Right ventricle myocardium inferior (tissue), 1 donor: ENCODE measurements at regions of chr17 and their contacts with region 1.

Region 1: DNA sequence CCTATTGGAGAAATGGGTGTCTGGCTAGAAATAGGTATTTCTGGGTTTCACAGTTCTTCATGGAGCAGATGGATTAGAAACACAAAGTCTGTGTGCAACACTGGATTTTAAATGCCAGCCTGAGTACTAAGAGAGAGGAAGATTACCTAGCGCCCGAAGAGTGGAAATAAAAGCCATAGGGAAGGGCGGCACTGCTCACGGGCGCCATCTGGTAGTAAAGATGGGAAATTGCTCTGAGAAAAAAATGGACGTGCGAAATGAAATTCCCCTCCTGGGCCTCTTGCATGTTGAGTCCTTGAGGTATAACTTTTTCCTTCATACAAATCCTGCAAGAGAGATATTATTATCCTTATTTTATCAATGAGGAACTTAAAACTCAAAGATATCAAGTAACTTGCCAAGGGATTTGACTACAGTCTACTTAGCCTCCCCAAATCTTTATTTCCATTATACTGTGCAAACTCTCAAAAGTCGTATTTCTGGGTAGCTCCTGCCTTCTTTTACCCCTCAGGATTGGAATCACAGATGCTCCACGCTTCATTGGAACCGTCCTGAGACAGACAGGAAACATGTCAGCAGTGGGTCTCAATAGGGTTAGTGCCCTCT is 72.8 kb downstream of the MMD start:
- DNase-seq: peak; percentile 56
- ATAC-seq: peak; percentile 80

Region 2: GRCh38 chr17:55053855-55054254 is 295.0 kb before region 1 on chr17:
- intact Hi-C with region 1: loop called (anchors 10 kb)
- DNase-seq: no peak
- ATAC-seq: no peak

Region 3: GRCh38 chr17:55238179-55238930 is 110.5 kb before region 1 on chr17:
- intact Hi-C with region 1: loop called (anchors 2 kb)
- DNase-seq: peak; percentile 95
- ATAC-seq: peak; percentile 99

Region 4: DNA sequence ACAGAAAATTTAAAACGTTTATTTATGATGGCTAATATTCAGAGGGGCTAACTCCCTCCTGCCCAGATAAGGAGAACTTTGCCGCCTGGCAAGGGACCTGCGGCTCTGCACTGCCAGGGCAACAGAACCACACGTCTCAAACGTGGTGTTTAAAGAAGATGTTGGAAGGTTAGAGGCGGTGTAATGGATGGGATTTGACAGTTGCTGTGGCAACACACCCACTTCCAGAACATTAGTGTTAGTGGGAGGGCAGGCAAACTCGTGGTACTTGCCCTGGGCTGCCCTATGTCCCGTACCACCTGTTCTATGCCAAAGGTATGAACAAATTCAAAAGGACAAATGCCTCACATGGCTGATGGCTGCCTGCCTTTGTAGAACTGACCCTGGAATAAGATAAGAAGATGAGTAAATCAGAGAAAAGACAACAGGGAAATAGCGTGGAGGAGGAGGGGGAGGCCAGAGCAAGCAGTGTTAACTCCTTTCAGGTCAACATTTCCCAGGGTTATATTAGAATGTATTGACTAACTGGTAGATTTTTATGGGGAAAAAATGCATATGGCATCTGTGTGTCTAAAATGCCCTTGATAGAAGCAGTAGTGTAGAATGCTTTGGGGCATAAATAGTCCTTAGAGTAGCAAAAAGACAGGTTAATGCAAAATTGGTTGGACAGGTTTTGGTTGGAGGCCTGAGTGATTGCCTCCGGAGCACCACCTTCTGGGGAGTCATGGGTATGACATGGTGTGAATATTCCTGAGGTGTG is 53.3 kb before region 1 on chr17:
- intact Hi-C with region 1: loop called (anchors 10 kb)
- DNase-seq: no peak
- ATAC-seq: peak; percentile 89

Region 5: DNA sequence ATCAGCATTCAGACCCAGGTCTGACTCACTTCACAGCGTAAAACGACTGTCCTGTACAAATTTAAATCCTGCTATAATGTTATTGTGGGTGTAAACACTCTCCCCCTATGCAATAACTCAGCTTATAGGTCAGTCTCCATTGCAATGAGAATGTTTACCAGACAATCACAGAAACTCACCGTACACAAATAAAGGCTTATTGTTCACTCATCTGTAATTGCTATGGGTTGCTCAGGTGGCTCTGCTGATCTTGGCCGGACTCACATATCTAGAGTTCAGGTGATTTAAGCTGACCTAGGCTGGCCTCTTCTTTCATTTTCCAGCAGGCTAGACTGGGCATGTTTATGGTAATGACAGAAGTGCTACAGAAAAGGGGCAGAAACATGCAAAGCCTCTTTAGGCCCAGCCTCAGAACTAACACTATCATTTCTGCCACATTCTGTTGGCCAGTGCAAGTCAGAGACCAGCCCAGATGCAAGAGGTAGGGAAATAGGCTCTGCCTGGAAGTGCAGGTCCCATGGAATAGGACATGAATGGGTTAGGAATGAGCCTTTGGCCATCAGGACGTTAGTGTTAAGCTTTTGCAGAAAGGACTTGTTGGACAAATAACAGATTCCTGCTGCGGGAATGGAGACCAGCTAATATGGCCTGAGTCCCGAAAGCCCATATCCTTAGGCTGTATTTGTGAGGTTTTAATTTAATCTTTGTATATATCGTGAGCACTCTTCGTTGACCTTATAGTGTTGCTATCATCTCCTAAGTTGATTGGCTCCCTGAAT is 40.0 kb before region 1 on chr17:
- intact Hi-C with region 1: no loop called
- DNase-seq: no peak
- ATAC-seq: no peak